Heart right ventricle (tissue), 16 donors: ENCODE measurements at regions of chr4 and their contacts with region 1.

Region 1: DNA sequence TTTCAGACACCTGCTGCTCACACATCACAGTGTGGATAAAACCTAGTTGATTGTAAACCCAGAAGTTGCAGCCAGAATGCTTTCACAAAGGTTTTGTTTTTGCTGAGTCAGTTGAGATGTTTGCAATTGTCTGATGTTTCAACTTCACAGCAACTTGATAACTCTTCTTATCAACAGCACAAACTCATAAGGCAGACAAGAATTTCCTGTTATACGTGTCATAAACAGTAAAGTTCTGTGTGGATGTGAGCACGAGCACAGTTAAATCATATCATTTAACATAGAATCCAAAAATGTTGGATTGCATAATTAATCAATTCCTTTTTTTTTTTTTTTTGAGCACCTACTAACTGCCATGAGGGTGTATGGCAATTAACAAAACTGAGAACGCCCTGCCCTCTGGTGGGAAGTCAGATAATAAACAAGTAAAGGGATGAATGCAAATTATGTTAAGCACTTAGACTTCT is 512.2 kb downstream of the PDHA2 start:
- DNase-seq: no peak
- ATAC-seq: no peak
- H3K4me3 ChIP-seq: no peak overlapping the region
- H3K27ac ChIP-seq: no peak overlapping the region
- H3K4me1 ChIP-seq: peaks cover 0 to 29% (median 0%) of the 10 kb centered on the region in 9 donors
- H3K27me3 ChIP-seq: no peaks in the 10 kb centered on the region
- CTCF ChIP-seq: peak in 7 of 9 donors; percentile 23 to 52 (median 37)

Region 2: DNA sequence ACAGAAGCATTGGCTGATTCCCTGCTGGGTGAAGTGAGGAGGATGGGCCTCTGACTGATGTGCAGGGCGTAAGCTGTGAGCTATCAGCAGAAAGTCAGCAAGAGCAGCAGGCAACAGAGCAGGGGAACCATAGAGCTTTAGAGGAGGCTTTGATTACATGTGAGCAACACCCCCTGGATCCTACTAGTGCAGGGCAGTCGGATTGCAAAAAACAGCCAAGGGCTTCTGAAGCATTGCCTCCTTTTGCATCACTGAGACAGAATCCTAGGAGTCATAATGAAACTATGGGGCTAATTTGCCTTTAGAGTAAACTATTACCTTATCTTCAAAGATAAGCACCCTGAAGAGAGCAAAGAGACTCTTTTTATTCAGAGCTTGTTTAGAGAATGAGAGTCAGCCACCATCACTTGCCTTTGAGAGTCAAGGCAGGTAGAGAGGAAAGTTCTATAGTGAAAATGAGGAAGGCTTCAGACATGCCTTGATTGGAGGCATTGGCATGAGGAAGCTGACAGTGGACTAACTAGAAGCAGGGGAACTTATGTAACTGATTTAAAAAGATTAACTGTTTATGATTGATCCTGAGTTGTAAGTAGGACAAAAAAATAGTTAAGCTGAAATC is 91.9 kb before region 1 on chr4:
- intact Hi-C with region 1: loop called in 1 of 10 experiments (anchors 10 kb)
- DNase-seq: no peak
- ATAC-seq: no peak
- H3K4me3 ChIP-seq: no peak overlapping the region
- H3K27ac ChIP-seq: no peak overlapping the region
- H3K4me1 ChIP-seq: no peaks in the 10 kb centered on the region
- H3K27me3 ChIP-seq: no peaks in the 10 kb centered on the region
- CTCF ChIP-seq: no peak

Region 3: GRCh38 chr4:96429657-96430056 is 77.6 kb after region 1 on chr4:
- intact Hi-C with region 1: loop called in 1 of 10 experiments (anchors 2 kb)
- DNase-seq: no peak
- ATAC-seq: peak in 2 of 8 donors; percentile 26 to 71
- H3K4me3 ChIP-seq: no peak overlapping the region
- H3K27ac ChIP-seq: no peak overlapping the region
- H3K4me1 ChIP-seq: peaks cover 0 to 10% (median 0%) of the 10 kb centered on the region in 9 donors
- H3K27me3 ChIP-seq: no peaks in the 10 kb centered on the region
- CTCF ChIP-seq: no peak